Activated CD4-positive, alpha-beta memory T cell treated with anti-CD3 and anti-CD28 coated beads, Interleukin-2, amount 10 ng/mL, durations not matched to agents 7 days and 5 days (primary cell): ENCODE measurements at regions of chr5 and their contacts with region 1.

Region 1: DNA sequence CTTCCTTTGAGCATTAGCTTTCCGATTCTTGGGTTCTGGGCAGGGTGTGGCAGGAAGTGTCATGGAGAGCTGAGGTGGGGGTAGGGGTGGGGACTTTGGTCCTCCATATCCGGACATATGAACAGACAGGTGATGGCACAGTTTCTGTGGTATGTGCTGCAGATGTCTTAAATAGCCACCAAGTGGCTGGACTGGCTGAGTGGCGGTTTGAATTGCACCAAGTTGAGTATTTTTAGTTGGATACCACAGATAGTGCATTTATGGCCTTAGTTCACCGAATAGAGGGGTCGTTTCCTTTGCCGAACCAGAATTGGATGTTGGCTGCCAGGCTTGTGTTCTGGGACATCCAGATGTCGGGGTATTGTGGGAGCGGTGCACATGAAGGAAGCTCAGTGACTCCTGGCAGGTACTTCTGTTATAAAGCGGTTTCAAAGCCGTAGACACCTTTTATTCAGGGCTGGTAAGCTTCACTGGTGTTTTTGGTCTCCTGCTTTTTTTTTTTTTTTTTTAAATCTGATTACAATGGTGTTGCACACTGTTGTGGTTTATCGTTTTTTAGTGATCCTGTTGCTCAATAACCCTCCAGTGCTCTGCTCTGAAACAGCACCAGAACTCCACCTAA is 15.1 kb upstream of the TNFAIP8 start:
- DNase-seq: peak; percentile 85
- H3K4me3 Mint-ChIP-seq: peak overlapping the region; percentile 77
- H3K27ac Mint-ChIP-seq: peak overlapping the region; percentile 94
- H3K4me1 Mint-ChIP-seq: peaks cover 90% of the 10 kb centered on the region
- H3K27me3 Mint-ChIP-seq: no peaks in the 10 kb centered on the region

Region 2: DNA sequence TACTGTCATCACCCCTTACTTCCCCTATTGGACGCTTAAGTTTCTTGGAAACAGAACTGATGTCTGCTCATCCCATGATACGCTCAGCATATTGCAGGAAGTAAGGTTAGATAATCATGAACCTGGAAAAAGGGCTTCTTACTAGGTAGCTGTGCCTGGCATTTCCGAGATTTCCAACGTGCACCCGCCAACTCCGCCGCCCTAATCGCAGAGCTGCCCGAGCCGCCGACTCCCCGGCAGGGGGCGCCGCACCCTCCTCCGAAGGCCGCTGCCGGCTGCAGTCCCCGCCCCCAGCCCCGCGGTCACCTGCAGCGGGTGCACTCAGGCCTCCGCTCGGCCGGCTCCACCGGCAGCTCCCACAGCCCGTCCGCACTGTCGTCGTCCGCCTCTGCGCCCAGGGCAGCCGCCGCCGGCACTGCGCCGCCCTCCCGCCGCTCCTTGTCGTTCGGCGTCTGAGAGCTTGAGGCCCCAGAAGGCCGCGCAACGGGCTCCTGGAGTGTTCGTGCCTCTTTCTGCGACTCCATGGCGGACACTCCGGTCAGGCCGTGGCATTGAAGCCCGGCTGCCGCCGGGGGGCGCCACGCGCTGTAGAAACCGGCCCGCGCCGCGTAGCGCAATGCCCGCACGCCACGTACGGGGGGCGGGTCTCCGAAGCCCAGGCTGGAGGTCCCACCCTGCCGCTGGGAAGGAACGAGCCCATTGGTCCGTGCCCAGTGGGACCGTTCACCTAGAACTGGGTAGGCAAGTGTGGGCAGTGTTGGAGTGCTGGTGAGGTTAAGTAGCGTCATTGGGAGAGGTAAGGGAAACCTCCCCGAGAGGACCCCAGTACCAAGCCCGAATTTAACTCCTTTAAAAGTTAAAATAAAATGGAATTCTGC is 352.5 kb before region 1 on chr5 and contains the start of gene DTWD2:
- CTCF ChIA-PET with region 1: interaction called, 12 read pairs
- POLR2A ChIA-PET with region 1: interaction called, 3 read pairs
- DNase-seq: peak; percentile 91
- H3K4me3 Mint-ChIP-seq: peak within 1 kb of the TSS; percentile 70
- H3K27ac Mint-ChIP-seq: peak within 1 kb of the TSS; percentile 21
- H3K4me1 Mint-ChIP-seq: peaks cover 13% of the 10 kb centered on the region
- H3K27me3 Mint-ChIP-seq: no peaks in the 10 kb centered on the region
- total RNA-seq, gene DTWD2: 1.3 to 1.6 TPM

Region 3: GRCh38 chr5:119267958-119268386 is 72.7 kb before region 1 on chr5:
- CTCF ChIA-PET with region 1: interaction called, 13 read pairs
- POLR2A ChIA-PET with region 1: interaction called, 391 read pairs
- DNase-seq: peak; percentile 86
- H3K4me3 Mint-ChIP-seq: peak overlapping the region; percentile 96
- H3K27ac Mint-ChIP-seq: peak overlapping the region; percentile 89
- H3K4me1 Mint-ChIP-seq: peaks cover 50% of the 10 kb centered on the region
- H3K27me3 Mint-ChIP-seq: peaks cover 2% of the 10 kb centered on the region

Region 4: GRCh38 chr5:119302916-119303897 is 37.5 kb before region 1 on chr5:
- CTCF ChIA-PET with region 1: interaction called, 4 read pairs
- POLR2A ChIA-PET with region 1: interaction called, 196 read pairs
- DNase-seq: no peak
- H3K4me3 Mint-ChIP-seq: no peak overlapping the region
- H3K27ac Mint-ChIP-seq: peak overlapping the region; percentile 32
- H3K4me1 Mint-ChIP-seq: peaks cover 90% of the 10 kb centered on the region
- H3K27me3 Mint-ChIP-seq: no peaks in the 10 kb centered on the region

Region 5: DNA sequence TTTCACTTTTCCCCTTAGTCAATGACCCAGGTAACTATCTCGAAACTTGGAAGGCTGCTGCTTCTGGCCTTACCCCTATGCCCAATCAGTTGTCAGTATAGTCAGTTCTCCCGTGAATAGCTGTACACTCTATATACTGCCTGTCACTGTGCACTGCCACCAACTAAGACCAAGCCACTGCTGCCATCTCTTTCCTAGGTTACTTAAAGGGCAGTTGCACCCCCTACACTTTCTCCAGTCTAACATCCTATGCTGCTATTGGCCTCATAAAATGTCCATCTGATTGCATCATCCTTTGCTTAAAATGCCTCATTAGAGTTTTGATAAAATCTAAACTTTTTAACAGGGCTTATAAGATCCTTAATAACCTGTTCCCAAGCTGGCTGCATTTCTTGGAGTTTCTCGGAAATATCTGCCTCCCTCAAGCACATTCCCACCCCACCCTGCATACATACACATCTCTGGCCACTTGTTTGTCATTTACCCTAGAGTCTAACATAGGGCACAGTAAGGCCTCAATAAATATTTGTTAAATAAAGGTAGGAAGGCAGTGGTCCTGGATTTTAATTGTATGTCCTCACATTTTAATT is 17.7 kb before region 1 on chr5:
- CTCF ChIA-PET with region 1: interaction called, 35 read pairs
- POLR2A ChIA-PET with region 1: interaction called, 234 read pairs
- DNase-seq: no peak
- H3K4me3 Mint-ChIP-seq: peak overlapping the region; percentile 45
- H3K27ac Mint-ChIP-seq: peak overlapping the region; percentile 81
- H3K4me1 Mint-ChIP-seq: peaks cover 93% of the 10 kb centered on the region
- H3K27me3 Mint-ChIP-seq: no peaks in the 10 kb centered on the region

Region 6: GRCh38 chr5:119355685-119356611 is 15.2 kb after region 1 on chr5 and contains the start of gene TNFAIP8:
- CTCF ChIA-PET with region 1: interaction called, 27 read pairs
- POLR2A ChIA-PET with region 1: interaction called, 779 read pairs
- DNase-seq: peak; percentile 65
- H3K4me3 Mint-ChIP-seq: peak within 1 kb of the TSS; percentile 94
- H3K27ac Mint-ChIP-seq: peak within 1 kb of the TSS; percentile 88
- H3K4me1 Mint-ChIP-seq: peaks cover 89% of the 10 kb centered on the region
- H3K27me3 Mint-ChIP-seq: no peaks in the 10 kb centered on the region
- total RNA-seq, gene TNFAIP8: 161 to 163 TPM

Region 7: GRCh38 chr5:119373449-119373858 is 32.7 kb after region 1 on chr5:
- CTCF ChIA-PET with region 1: no interaction called
- POLR2A ChIA-PET with region 1: interaction called, 779 read pairs
- DNase-seq: no peak
- H3K4me3 Mint-ChIP-seq: no peak overlapping the region
- H3K27ac Mint-ChIP-seq: no peak overlapping the region
- H3K4me1 Mint-ChIP-seq: peaks cover 61% of the 10 kb centered on the region
- H3K27me3 Mint-ChIP-seq: no peaks in the 10 kb centered on the region

Region 8: DNA sequence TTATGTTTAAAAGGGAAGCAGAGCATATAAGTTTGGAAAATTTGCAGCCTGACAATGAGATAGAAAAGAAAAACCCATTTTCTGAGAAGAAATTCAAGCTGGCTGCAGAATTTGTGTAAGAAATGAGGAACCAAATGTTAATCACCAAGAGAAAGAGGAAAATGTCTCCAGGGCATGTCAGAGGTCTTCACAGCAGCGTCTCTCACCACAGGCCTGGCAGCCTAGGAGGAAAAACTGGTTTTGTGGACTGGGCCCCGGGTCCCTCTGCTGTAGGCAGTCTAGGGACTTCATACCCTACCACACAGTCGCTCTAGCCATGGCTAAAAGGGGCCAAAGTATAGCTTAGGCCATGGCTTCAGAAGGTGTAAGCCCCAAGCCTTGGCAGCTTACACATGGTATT is 79.5 kb after region 1 on chr5:
- CTCF ChIA-PET with region 1: no interaction called
- POLR2A ChIA-PET with region 1: no interaction called
- DNase-seq: no peak
- H3K4me3 Mint-ChIP-seq: no peak overlapping the region
- H3K27ac Mint-ChIP-seq: no peak overlapping the region
- H3K4me1 Mint-ChIP-seq: peaks cover 9% of the 10 kb centered on the region
- H3K27me3 Mint-ChIP-seq: peaks cover 2% of the 10 kb centered on the region

Region 9: DNA sequence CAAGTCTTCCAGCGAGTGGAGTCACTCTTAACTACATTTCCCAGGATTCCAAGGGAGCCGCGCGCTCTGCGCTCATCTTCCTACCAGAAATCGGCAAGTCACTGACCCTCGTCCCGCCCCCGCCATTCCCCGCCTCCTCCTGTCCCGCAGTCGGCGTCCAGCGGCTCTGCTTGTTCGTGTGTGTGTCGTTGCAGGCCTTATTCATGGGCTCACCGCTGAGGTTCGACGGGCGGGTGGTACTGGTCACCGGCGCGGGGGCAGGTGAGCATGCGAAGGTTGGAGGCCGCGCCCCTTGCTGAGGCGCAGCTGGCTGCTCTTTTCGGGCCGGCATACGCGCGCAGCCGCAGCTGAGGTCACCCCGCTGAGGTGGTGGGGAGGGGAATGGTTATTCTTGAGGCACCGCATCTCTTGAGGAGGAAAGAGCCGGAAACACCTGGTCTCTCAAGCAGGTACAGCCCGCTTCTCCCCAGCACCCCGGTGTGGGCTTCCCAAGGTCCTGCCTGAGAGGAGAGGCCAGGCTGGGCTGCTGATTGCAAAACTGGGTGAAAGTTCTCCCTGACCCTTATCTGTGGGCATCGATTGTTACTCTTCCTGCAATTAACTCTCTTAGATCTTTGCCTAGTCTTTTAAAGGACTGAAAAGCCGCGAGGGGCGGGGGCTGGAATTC is 111.8 kb after region 1 on chr5 and contains the start of gene HSD17B4:
- CTCF ChIA-PET with region 1: no interaction called
- POLR2A ChIA-PET with region 1: no interaction called
- DNase-seq: peak; percentile 82
- H3K4me3 Mint-ChIP-seq: peak within 1 kb of the TSS; percentile 87
- H3K27ac Mint-ChIP-seq: peak within 1 kb of the TSS; percentile 44
- H3K4me1 Mint-ChIP-seq: peaks cover 20% of the 10 kb centered on the region
- H3K27me3 Mint-ChIP-seq: peaks cover 11% of the 10 kb centered on the region
- total RNA-seq, gene HSD17B4: 57.2 to 59.1 TPM